ENCODE measurements at regions of chr1 and their contacts with region 1.

Region 1: DNA sequence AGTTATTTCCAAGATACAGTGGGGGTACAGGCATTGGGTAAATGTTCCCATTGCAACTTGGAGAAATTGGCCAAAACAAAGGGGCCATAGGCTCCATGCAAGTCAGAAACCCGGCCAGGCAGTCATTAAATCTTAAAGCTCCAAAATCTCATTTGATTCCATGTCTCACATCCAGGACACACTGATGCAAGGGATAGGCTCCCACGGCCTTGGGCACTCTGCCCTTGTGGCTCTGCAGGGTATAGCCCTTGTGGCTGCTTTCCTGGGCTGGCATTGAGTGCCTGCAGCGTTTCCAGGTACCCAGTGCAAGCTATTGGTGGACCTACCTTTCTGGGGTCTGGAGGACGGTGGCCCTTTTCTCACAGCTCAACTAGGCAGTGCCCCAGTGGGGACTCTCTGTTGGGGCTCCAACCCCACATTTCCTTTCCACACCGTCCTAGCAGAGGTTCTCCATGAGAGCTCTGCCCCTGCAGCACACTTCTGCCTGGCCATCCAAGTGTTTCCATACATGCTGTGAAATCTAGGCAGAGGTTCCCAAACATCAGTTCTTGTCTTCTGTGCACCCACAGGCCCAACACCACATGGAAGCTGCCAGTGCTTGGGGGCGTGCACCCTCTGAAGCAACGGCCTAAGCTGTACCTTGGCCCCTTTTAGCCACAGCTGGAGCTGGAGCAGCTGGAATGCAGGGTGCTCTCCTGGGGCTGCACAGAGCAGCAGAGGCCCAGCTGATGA is 67.2 kb downstream of the HS2ST1 start:
- DNase-seq: no peak
- H3K4me3 ChIP-seq: no peak overlapping the region
- H3K27ac ChIP-seq: no peak overlapping the region
- H3K4me1 ChIP-seq: no peaks in the 10 kb centered on the region
- CTCF ChIP-seq: no peak

Region 2: DNA sequence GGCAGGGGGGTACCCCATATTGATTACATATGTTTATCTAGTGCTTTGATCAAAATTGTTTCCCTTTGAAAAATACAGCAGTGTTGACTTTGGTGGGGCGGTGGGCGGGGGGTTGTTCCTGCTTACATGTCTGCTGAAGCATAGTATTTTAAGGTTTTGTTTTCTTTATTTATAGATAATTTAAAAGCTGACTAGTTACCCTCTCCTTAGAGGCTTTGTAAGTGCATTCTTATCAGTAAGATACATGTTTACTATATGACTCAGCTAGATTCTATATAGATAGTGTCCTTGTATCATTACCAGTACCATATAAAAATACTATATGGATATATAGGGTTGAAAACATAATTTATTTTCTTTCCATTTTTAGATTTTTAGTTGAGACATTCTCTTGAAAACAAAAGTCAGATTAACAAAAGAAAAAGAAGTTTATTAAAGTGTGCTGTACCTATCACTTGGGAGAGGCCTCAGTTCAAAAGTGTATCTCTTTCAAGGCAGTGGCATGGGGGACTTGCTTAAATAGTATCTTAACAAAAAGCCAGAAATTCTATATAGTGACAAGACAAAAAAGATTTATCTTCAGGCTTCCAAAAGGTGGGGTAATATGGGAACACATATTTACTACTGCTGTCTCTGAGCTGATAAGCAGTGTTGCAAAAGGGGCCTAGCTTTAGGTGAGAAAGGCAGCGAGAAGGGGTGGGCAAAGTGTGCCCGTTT is 11.8 kb after region 1 on chr1:
- CTCF ChIA-PET with region 1: no interaction called
- POLR2A ChIA-PET with region 1: interaction called, 13 read pairs
- intact Hi-C with region 1: no loop called
- DNase-seq: no peak
- H3K4me3 ChIP-seq: no peak overlapping the region
- H3K27ac ChIP-seq: no peak overlapping the region
- H3K4me1 ChIP-seq: peaks cover 4% of the 10 kb centered on the region
- CTCF ChIP-seq: no peak

Measured in OCI-LY7 (cell line).